Endothelial cell of umbilical vein (primary cell): ENCODE measurements at regions of chr20 and their contacts with region 1.

Region 1: GRCh38 chr20:23245553-23246181 is 104.9 kb upstream of the NXT1 start:
- DNase-seq: peak; percentile 77
- H3K4me3 ChIP-seq: no peak overlapping the region
- H3K27ac ChIP-seq: no peak overlapping the region
- H3K4me1 ChIP-seq: no peaks in the 10 kb centered on the region
- H3K27me3 ChIP-seq: no peaks in the 10 kb centered on the region
- CTCF ChIP-seq: peak; percentile 67 to 88
- POLR2A ChIP-seq: no peak

Region 2: DNA sequence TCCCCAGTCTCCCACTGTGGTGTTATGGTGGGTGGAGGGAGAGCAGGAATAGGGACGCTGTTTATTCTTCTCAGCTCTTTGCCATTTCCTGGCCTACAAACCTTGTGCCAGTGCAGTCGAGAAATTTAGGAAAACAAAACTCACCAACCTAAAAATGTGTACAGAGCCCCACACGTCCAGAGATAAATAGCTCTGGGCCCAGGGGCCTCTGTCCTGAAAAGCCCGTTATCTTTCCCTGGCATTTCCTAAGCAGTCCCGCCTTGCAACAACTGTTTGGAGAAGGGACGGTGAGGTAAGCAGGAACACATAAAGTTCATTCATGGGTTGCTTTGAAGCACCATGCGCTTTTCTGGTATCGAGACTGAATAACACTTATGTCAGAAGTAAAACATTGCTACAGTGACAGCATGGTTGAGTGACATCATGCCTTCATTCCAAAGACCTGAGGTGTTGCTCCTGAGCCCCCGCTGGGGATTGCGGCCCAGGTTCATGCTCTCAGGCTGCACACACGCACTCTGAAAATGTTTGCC is 24.8 kb after region 1 on chr20:
- CTCF ChIA-PET with region 1: interaction called, 7 read pairs
- POLR2A ChIA-PET with region 1: no interaction called
- dilution Hi-C with region 1: no loop called
- intact Hi-C with region 1: loop called (anchors 1 kb)
- DNase-seq: peak; percentile 83
- H3K4me3 ChIP-seq: no peak overlapping the region
- H3K27ac ChIP-seq: peak overlapping the region; percentile 76
- H3K4me1 ChIP-seq: peaks cover 17% of the 10 kb centered on the region
- H3K27me3 ChIP-seq: no peaks in the 10 kb centered on the region
- CTCF ChIP-seq: no peak
- POLR2A ChIP-seq: no peak

Region 3: GRCh38 chr20:23772074-23772473 is 526.4 kb after region 1 on chr20:
- CTCF ChIA-PET with region 1: no interaction called
- POLR2A ChIA-PET with region 1: no interaction called
- dilution Hi-C with region 1: no loop called
- intact Hi-C with region 1: no loop called
- DNase-seq: no peak
- H3K4me3 ChIP-seq: no peak overlapping the region
- H3K27ac ChIP-seq: no peak overlapping the region
- H3K4me1 ChIP-seq: no peaks in the 10 kb centered on the region
- H3K27me3 ChIP-seq: peaks cover 7 to 14% of the 10 kb centered on the region in 2 experiments
- CTCF ChIP-seq: no peak
- POLR2A ChIP-seq: no peak